K562 (cell line): ENCODE measurements at regions of chr7 and their contacts with region 1.

Region 1: DNA sequence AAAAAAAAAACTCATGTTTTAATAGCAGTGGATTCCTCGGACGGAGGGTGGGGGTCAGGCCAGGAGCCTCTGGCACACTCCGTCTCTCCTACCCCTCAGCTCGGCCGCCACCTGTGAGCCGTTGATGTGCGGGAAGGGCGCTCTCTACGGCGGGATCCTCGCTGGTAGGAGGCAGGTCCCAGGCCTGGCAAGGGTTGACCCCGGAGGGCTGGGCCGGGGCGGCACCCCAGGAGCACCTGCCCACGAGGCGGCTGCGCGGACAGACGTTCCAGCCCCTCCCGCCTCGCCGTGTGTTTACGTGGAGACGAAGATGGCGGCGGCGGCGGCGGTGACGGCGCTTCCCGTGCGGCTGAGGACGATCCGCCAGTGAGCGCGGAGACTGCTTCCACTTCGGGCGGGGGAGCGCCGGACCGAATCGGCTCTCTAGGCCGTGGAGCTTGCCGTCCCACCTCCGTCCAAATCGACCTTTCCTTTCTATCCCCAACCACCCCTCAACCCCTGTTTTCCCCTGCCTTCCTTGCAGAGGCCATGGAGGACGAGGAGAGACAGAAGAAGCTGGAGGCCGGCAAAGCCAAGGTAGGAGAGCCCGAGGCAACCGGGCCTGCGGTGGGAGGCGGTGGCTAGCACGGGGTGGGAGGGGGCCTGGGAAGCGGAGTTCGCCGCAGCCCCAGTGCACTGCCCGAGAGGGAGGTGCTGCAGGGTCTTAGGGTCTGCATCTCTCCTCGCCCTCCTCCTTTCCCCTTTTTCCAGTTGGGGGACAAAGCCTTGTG is at the start of gene AKAP9:
- DNase-seq: peak; percentile 91 to 95 (median 91)
- ATAC-seq: peak; percentile 92
- H3K4me3 ChIP-seq: peak within 1 kb of the TSS; percentile 87
- H3K27ac ChIP-seq: peak within 1 kb of the TSS; percentile 95
- H3K4me1 ChIP-seq: peaks cover 2 to 5% of the 10 kb centered on the region in 2 experiments; a peak in 2 of 5 replicates
- H3K27me3 ChIP-seq: no peaks in the 10 kb centered on the region
- CTCF ChIP-seq: peak in 1 of 3 experiments; percentile 13; a peak in 1 of 6 replicates
- EP300 ChIP-seq: no peak
- POLR2A ChIP-seq: peak; percentile 96
- RAD21 ChIP-seq: no peak; a peak in 1 of 4 replicates
- polyA plus RNA-seq, gene AKAP9: 25.5 to 49.4 TPM

Region 2: GRCh38 chr7:91922857-91923256 is 17.9 kb before region 1 on chr7:
- CTCF ChIA-PET with region 1: no interaction called
- POLR2A ChIA-PET with region 1: interaction called, 11 read pairs
- in situ Hi-C with region 1: no loop called
- intact Hi-C with region 1: no loop called
- DNase-seq: no peak
- ATAC-seq: no peak
- H3K4me3 ChIP-seq: no peak overlapping the region
- H3K27ac ChIP-seq: no peak overlapping the region
- H3K4me1 ChIP-seq: no peaks in the 10 kb centered on the region
- H3K27me3 ChIP-seq: no peaks in the 10 kb centered on the region
- CTCF ChIP-seq: no peak
- EP300 ChIP-seq: no peak
- POLR2A ChIP-seq: no peak
- RAD21 ChIP-seq: no peak

Region 3: GRCh38 chr7:91953618-91954017 is 12.9 kb after region 1 on chr7:
- CTCF ChIA-PET with region 1: no interaction called
- POLR2A ChIA-PET with region 1: interaction called, 37 read pairs
- in situ Hi-C with region 1: no loop called
- intact Hi-C with region 1: no loop called
- DNase-seq: peak; percentile 36 to 59 (median 42)
- ATAC-seq: peak; percentile 37; the same call in 2 of the 3 replicates
- H3K4me3 ChIP-seq: no peak overlapping the region
- H3K27ac ChIP-seq: no peak overlapping the region
- H3K4me1 ChIP-seq: peaks cover 0 to 10% of the 10 kb centered on the region in 2 experiments; a peak in 3 of 5 replicates
- H3K27me3 ChIP-seq: no peaks in the 10 kb centered on the region
- CTCF ChIP-seq: peak in 2 of 3 experiments; percentile 33 to 47; a peak in 3 of 6 replicates
- EP300 ChIP-seq: no peak
- POLR2A ChIP-seq: no peak
- RAD21 ChIP-seq: no peak

Region 4: DNA sequence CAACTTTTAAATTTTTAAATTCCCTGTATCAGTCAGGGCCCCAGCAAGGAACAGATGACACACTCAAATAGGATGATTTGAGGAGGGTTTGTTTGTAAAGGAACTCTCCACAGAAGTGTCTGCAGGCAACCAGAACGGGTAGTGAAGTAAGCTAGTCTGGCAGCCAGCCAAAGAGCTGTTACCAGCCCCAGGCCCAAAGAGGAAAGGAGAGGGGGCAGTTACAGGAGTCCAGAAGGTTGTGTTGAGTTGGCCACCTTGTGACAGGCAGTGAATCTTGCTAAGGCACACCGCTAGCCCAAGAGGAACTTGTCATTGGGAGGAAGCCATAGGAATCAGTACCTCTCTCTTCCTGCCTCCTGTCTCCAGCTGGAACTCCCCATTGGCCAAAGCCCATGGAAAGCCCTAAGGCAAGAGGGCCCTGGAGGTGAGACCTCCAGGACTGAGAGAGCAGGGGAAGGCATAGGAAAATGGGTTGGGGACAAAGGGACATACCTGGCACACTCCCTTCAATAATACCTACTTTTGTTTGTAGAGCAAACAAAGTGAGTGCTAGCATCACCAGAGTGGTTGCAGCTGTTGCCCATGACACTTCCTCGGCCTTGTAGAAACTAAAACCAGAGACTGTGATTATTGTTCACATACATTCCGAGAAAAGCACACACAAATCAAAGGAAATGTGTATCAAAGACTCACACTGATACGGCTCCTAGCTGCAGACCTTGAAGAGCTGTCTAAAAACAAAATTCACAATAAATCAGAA is 481.1 kb after region 1 on chr7:
- CTCF ChIA-PET with region 1: no interaction called
- POLR2A ChIA-PET with region 1: no interaction called
- in situ Hi-C with region 1: no loop called
- intact Hi-C with region 1: loop called (anchors 10 kb)
- DNase-seq: peak in 3 of 4 experiments; percentile 26 to 59 (median 33)
- ATAC-seq: no peak
- H3K4me3 ChIP-seq: no peak overlapping the region
- H3K27ac ChIP-seq: no peak overlapping the region
- H3K4me1 ChIP-seq: peaks cover 14 to 20% of the 10 kb centered on the region in 2 experiments
- H3K27me3 ChIP-seq: no peaks in the 10 kb centered on the region
- CTCF ChIP-seq: no peak
- EP300 ChIP-seq: no peak
- POLR2A ChIP-seq: no peak
- RAD21 ChIP-seq: no peak

Region 5: GRCh38 chr7:92633211-92633906 is 692.6 kb after region 1 on chr7:
- CTCF ChIA-PET with region 1: no interaction called
- POLR2A ChIA-PET with region 1: no interaction called
- in situ Hi-C with region 1: no loop called
- intact Hi-C with region 1: no loop called
- DNase-seq: peak in 3 of 4 experiments; percentile 31 to 76 (median 39)
- ATAC-seq: peak; percentile 69
- H3K4me3 ChIP-seq: no peak overlapping the region
- H3K27ac ChIP-seq: peak overlapping the region; percentile 33; the same call in 1 of the 3 replicates
- H3K4me1 ChIP-seq: peaks cover 0 to 29% of the 10 kb centered on the region in 2 experiments; a peak in 3 of 5 replicates
- H3K27me3 ChIP-seq: no peaks in the 10 kb centered on the region
- CTCF ChIP-seq: no peak
- EP300 ChIP-seq: peak; percentile 44; the same call in 1 of the 2 replicates
- POLR2A ChIP-seq: no peak
- RAD21 ChIP-seq: no peak